ENCODE measurements at regions of chr1 and their contacts with region 1.

Region 1: DNA sequence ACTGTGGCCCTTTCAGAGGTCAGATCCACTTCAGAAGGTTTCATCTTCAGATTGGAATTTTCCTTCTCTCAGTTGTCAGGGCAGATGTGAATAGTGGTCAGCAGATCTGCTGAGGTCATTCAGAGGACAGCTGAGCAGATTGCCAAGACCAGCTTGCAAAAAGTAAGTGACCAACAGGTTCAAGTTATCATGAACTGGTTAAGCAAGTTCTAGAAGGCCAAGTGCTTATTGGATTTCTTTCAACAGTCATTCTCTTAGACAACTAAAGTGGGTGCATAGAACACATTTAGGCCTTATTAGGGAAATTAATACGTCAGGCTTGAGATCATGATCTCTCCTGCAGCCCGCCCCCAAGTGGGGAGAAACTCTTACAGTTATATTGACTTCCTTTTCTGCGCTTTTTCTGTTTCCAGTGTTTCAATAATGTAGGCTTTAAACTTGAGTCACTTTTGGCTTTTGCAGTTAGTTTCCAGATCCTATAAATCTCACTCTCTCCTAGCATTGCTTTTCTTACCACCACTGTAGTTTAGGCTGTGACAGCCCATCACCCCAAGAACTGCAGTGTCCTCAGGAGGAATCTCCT is 96.4 kb downstream of the C1orf21 start:
- DNase-seq: peak; percentile 58
- ATAC-seq: peak; percentile 50

Region 2: DNA sequence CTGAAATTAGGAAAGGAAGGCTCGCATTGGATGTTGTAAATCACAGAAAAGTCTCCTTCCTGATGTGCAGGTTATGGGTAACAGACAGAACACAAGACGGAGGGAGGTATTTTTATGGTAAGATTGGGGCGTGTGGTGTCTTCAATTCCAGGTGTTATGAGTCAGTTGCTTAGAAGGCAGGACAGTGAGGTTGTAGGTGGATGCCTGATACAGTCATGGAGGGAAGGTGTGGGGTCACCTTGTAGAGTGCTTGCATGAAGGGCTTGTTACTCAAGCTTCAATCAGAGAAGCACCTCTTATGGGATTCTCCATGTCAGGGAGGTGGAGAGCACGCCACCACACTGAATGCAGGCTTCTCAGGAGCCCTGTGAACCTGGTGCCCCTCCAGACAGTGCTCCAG is 33.3 kb before region 1 on chr1:
- intact Hi-C with region 1: no loop called
- DNase-seq: no peak
- ATAC-seq: no peak

Region 3: GRCh38 chr1:184535191-184535970 is 52.2 kb after region 1 on chr1:
- intact Hi-C with region 1: no loop called
- DNase-seq: no peak
- ATAC-seq: peak; percentile 80

Region 4: GRCh38 chr1:184622136-184622823 is 139.1 kb after region 1 on chr1:
- intact Hi-C with region 1: loop called (anchors 10 kb)
- DNase-seq: peak; percentile 81
- ATAC-seq: peak; percentile 83